ENCODE measurements at regions of chr1 and their contacts with region 1.

Region 1: GRCh38 chr1:91282695-91283420 is 121.8 kb downstream of the HFM1 start:
- DNase-seq: peak; percentile 34
- H3K4me3 ChIP-seq: no peak overlapping the region
- H3K27ac ChIP-seq: no peak overlapping the region
- H3K4me1 ChIP-seq: no peaks in the 10 kb centered on the region
- H3K27me3 ChIP-seq: no peaks in the 10 kb centered on the region
- CTCF ChIP-seq: peak; percentile 78

Region 2: DNA sequence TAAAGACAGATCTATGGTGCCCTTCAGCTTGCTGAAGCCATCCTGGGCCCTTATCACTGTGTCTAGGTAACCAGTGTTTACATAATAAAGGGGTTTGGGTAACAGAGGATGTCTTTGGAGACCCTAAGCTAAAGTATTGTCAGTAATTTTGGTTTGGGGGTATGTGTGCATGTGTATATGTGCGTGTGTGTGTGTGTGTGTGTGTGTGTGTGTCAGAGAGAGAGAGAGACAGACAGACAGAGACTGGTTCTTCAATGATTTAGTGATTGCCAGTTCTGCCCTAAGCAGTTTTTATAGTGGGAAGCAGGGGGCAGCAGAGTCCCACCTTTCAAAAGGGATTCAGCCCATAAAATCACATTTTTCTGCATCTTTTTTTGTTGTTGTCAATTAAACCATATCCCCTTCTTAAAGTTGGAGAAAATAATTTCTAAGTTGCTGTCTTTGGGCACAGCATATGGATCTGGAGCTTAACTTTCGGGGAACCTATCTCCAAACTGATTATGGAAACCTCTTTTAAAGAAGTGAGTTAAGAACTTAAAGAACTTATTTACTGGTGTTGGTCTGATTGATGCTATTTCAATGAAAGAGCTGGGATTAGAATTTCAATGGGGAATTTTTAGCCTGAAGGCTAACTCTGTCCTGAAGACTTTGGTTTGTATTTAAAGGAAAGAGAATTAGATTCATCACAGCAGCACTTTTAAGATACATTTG is 1236.8 kb before region 1 on chr1:
- CTCF ChIA-PET with region 1: no interaction called
- dilution Hi-C with region 1: no loop called
- in situ Hi-C with region 1: no loop called
- intact Hi-C with region 1: loop called (anchors 5 kb)
- DNase-seq: no peak
- H3K4me3 ChIP-seq: no peak overlapping the region
- H3K27ac ChIP-seq: no peak overlapping the region
- H3K4me1 ChIP-seq: no peaks in the 10 kb centered on the region
- H3K27me3 ChIP-seq: peaks cover 1% of the 10 kb centered on the region
- CTCF ChIP-seq: peak; percentile 55 to 62

Region 3: GRCh38 chr1:90114521-90115141 is 1168.2 kb before region 1 on chr1:
- CTCF ChIA-PET with region 1: no interaction called
- dilution Hi-C with region 1: no loop called
- in situ Hi-C with region 1: no loop called
- intact Hi-C with region 1: loop called (anchors 5 kb)
- DNase-seq: peak; percentile 41
- H3K4me3 ChIP-seq: no peak overlapping the region
- H3K27ac ChIP-seq: no peak overlapping the region
- H3K4me1 ChIP-seq: no peaks in the 10 kb centered on the region
- H3K27me3 ChIP-seq: no peaks in the 10 kb centered on the region
- CTCF ChIP-seq: peak; percentile 59 to 74

Region 4: GRCh38 chr1:90155721-90156487 is 1127.0 kb before region 1 on chr1:
- CTCF ChIA-PET with region 1: no interaction called
- dilution Hi-C with region 1: no loop called
- in situ Hi-C with region 1: no loop called
- intact Hi-C with region 1: no loop called
- DNase-seq: peak; percentile 73
- H3K4me3 ChIP-seq: no peak overlapping the region
- H3K27ac ChIP-seq: peak overlapping the region; percentile 20
- H3K4me1 ChIP-seq: peaks cover 12% of the 10 kb centered on the region
- H3K27me3 ChIP-seq: no peaks in the 10 kb centered on the region
- CTCF ChIP-seq: no peak

Region 5: GRCh38 chr1:91148641-91149069 is 134.2 kb before region 1 on chr1:
- CTCF ChIA-PET with region 1: no interaction called
- dilution Hi-C with region 1: no loop called
- in situ Hi-C with region 1: no loop called
- intact Hi-C with region 1: no loop called
- DNase-seq: no peak
- H3K4me3 ChIP-seq: no peak overlapping the region
- H3K27ac ChIP-seq: no peak overlapping the region
- H3K4me1 ChIP-seq: no peaks in the 10 kb centered on the region
- H3K27me3 ChIP-seq: no peaks in the 10 kb centered on the region
- CTCF ChIP-seq: no peak

Region 6: DNA sequence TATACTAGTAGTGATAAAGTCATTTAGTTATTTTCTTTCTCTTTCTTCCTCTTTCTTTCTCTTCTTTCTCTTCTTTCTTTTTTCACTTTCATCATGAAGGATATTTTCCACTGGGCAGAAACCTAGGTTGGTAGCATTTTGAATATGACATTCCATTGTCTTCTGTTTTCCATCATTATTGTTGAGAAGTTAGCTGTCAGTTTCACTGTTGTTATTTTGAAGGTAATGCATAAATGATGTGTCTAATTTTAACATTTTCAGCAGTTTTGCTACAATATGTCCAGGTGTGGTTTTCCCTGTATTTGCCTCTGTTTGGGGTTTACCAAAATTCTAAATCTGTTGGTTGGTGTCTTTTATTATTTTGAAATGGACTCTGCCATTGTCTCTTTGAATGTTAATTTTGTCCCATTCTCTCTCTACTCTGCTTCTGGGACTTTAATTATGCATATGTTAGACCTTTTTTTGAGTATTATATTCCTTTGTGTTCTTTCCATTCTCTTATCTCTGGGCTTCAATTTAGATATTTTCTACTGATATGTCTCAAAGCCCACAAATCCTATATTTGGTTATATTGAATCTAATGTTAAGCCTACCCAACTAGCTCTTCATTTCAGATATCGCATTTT is 25.0 kb after region 1 on chr1:
- CTCF ChIA-PET with region 1: no interaction called
- dilution Hi-C with region 1: no loop called
- in situ Hi-C with region 1: no loop called
- intact Hi-C with region 1: no loop called
- DNase-seq: no peak
- H3K4me3 ChIP-seq: no peak overlapping the region
- H3K27ac ChIP-seq: no peak overlapping the region
- H3K4me1 ChIP-seq: no peaks in the 10 kb centered on the region
- H3K27me3 ChIP-seq: no peaks in the 10 kb centered on the region
- CTCF ChIP-seq: no peak

Region 7: GRCh38 chr1:91404151-91405012 is 121.5 kb after region 1 on chr1 and contains the start of gene HFM1:
- CTCF ChIA-PET with region 1: no interaction called
- dilution Hi-C with region 1: no loop called
- in situ Hi-C with region 1: no loop called
- intact Hi-C with region 1: loop called (anchors 1 kb)
- DNase-seq: peak; percentile 52
- H3K4me3 ChIP-seq: peak within 1 kb of the TSS; percentile 50 to 66 (median 61)
- H3K27ac ChIP-seq: no peak within 1 kb of the TSS
- H3K4me1 ChIP-seq: peaks cover 5% of the 10 kb centered on the region
- H3K27me3 ChIP-seq: peaks cover 4% of the 10 kb centered on the region
- CTCF ChIP-seq: no peak
- total RNA-seq, gene HFM1: 0.83 TPM in 1 of 2 donors, not detected in the other

Region 8: GRCh38 chr1:91500756-91501522 is 218.1 kb after region 1 on chr1 and contains the start of gene CDC7:
- CTCF ChIA-PET with region 1: no interaction called
- dilution Hi-C with region 1: no loop called
- in situ Hi-C with region 1: no loop called
- intact Hi-C with region 1: loop called (anchors 2 kb)
- DNase-seq: peak; percentile 82
- H3K4me3 ChIP-seq: peak within 1 kb of the TSS; percentile 59 to 76 (median 67)
- H3K27ac ChIP-seq: peak within 1 kb of the TSS; percentile 85
- H3K4me1 ChIP-seq: peaks cover 3% of the 10 kb centered on the region
- H3K27me3 ChIP-seq: no peaks in the 10 kb centered on the region
- CTCF ChIP-seq: peak in 1 of 2 donors; percentile 47
- total RNA-seq, gene CDC7: 2.8 to 7.6 TPM

Region 9: GRCh38 chr1:91795591-91796389 is 512.9 kb after region 1 on chr1:
- CTCF ChIA-PET with region 1: no interaction called
- dilution Hi-C with region 1: no loop called
- in situ Hi-C with region 1: no loop called
- intact Hi-C with region 1: no loop called
- DNase-seq: peak; percentile 14
- H3K4me3 ChIP-seq: no peak overlapping the region
- H3K27ac ChIP-seq: no peak overlapping the region
- H3K4me1 ChIP-seq: no peaks in the 10 kb centered on the region
- H3K27me3 ChIP-seq: peaks cover 46% of the 10 kb centered on the region
- CTCF ChIP-seq: no peak